OCI-LY7 (cell line): ENCODE measurements at regions of chr10 and their contacts with region 1.

Region 1: DNA sequence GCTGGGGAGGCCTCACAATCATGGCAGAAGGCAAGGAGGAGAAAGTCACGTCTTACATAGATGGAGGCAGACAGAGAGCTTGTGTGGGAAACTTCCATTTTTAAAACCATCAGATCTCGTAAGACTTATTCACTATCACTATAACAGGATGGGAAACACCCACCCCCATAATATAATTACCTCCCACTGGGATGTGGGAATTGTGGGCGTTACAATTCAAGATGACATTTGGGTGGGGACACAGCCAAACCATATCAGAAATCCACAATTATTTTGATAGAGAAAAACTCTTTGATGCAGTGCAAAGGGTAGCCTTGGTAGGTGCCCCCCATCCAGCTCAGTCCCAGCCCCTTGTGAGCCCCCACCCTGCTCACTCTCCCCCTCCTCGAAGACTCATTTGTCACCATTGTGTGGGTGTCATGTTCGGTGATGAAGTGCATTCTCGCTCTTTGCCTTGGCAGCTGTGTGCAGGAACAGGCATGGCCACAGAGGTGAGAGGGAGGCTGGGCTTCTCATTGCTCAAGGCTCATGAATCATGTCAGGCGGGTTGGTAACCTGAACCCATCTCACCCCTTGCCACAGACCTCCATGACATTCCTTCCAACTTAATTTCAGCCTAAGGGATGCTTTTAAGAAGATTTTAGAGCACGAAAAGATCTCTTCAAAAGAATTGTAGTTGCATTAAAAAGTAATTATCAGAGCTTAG is 75.9 kb downstream of the BUB3 start:
- DNase-seq: no peak
- H3K4me3 ChIP-seq: no peak overlapping the region
- H3K27ac ChIP-seq: no peak overlapping the region
- H3K4me1 ChIP-seq: no peaks in the 10 kb centered on the region
- CTCF ChIP-seq: no peak

Region 2: DNA sequence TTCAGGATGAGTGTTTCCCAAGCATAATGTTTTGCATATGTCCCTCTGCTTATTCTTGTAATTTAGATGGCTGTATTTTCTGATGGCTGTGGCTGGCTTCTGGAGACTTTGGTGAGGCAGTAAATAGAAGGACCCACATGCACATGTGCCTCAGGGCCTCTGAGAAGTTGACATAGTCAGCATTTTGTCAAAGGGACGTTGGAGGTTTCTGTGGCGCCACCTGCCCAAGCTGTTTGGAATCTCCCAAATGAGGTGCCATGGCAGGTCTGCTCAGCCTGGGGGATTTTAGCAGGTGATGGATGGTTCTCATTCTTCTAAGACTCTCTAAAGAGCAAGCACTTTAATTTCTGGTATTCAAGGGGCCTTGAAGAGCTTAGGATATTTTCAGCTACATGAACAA is 560.2 kb before region 1 on chr10:
- CTCF ChIA-PET with region 1: no interaction called
- POLR2A ChIA-PET with region 1: no interaction called
- intact Hi-C with region 1: no loop called
- DNase-seq: no peak
- H3K4me3 ChIP-seq: no peak overlapping the region
- H3K27ac ChIP-seq: no peak overlapping the region
- H3K4me1 ChIP-seq: no peaks in the 10 kb centered on the region
- CTCF ChIP-seq: peak; percentile 27; the same call in 1 of the 2 replicates

Region 3: DNA sequence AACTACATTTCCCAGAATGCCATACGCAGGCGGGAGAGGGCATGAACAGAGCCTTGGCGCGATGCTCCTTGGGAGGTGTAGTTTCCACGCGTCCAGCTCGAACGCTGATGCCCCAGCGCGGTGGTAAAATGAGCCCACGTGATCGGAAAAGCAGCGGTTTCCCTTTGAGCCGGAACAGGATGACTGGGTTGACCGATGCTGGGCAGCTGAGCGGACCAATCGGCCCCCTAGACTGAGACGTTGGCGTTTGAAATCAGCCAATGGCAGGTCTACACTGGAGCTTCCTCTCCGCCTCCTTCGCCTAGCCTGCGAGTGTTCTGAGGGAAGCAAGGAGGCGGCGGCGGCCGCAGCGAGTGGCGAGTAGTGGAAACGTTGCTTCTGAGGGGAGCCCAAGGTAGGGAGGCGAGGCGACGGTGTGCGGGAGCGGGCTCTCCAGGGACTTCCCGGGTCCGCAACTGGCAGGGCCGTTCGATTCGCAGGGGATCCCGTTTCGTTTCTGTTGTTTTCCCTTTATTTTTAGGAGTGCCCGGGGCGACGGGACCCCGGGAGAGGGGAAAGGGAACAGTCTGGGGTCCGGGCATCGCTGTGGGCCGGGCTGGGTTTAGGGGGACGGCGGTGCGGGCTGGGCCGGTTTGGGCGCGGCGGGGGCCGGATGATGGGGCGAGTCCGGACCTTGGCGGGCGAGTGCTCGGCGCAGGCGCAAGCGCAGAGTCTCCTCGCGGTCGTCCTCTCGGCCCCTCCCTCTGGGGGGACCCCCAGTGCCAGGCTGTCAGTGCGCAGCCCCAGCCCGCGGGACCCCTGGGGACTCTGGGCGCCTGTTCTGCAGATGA is 75.8 kb before region 1 on chr10 and contains the start of gene BUB3:
- CTCF ChIA-PET with region 1: no interaction called
- POLR2A ChIA-PET with region 1: no interaction called
- intact Hi-C with region 1: no loop called
- DNase-seq: peak; percentile 99
- H3K4me3 ChIP-seq: peak within 1 kb of the TSS; percentile 92
- H3K27ac ChIP-seq: peak within 1 kb of the TSS; percentile 83
- H3K4me1 ChIP-seq: peaks cover 54% of the 10 kb centered on the region
- CTCF ChIP-seq: no peak
- total RNA-seq, gene BUB3: 437 and 526 TPM in 2 replicates

Region 4: GRCh38 chr10:123413353-123413752 is 183.3 kb after region 1 on chr10:
- CTCF ChIA-PET with region 1: no interaction called
- POLR2A ChIA-PET with region 1: no interaction called
- intact Hi-C with region 1: loop called (anchors 10 kb)
- DNase-seq: peak; percentile 32
- H3K4me3 ChIP-seq: no peak overlapping the region
- H3K27ac ChIP-seq: no peak overlapping the region
- H3K4me1 ChIP-seq: no peaks in the 10 kb centered on the region
- CTCF ChIP-seq: peak; percentile 64

Region 5: DNA sequence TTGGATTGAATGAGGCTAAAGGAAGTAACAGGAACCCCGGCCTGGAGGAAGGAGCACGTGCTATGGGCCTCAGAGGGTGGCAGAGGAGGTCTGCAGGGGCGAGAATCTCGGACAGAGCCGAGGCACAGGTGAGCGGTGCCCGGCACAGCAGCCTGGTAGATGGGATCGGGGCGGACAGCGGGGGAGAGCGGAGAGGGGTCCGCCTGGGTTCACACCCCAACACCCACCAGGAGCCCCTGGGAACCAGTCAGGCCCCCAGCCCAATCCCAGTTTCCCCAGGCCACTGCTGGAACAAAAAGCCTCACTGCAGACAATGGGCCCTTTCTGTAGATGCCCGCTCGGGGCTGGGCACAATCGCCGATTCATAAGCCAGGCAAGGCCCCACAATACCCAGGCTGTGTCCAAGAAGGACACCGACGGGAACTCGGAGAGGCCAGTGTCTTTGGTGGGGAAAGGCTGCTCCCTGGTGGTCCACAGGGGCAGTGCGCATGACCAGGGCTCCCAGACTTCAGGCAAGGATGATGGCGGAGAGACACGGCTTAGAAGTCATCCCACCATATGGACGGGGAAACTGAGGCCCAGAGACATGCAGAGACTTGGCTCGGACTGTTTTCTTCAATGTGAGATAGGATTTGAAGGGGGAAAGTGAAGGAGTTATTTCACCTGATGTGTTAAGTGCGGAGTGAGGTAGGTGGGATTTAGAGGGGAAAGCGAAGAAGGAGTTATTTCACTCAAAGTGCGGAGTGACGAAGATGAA is 329.2 kb after region 1 on chr10:
- CTCF ChIA-PET with region 1: no interaction called
- POLR2A ChIA-PET with region 1: no interaction called
- intact Hi-C with region 1: loop called (anchors 5 kb)
- DNase-seq: peak; percentile 57
- H3K4me3 ChIP-seq: no peak overlapping the region
- H3K27ac ChIP-seq: no peak overlapping the region
- H3K4me1 ChIP-seq: no peaks in the 10 kb centered on the region
- CTCF ChIP-seq: peak; percentile 98

Region 6: GRCh38 chr10:123637303-123637880 is 407.3 kb after region 1 on chr10:
- CTCF ChIA-PET with region 1: no interaction called
- POLR2A ChIA-PET with region 1: no interaction called
- intact Hi-C with region 1: no loop called
- DNase-seq: no peak
- H3K4me3 ChIP-seq: no peak overlapping the region
- H3K27ac ChIP-seq: no peak overlapping the region
- H3K4me1 ChIP-seq: no peaks in the 10 kb centered on the region
- CTCF ChIP-seq: no peak